ENCODE measurements at regions of chr12 and their contacts with region 1.

Region 1: GRCh38 chr12:1795785-1796514 is 24.4 kb upstream of the LRTM2 start:
- DNase-seq: peak; percentile 82 to 91 (median 88)
- ATAC-seq: peak; percentile 98
- H3K4me3 ChIP-seq: no peak overlapping the region
- H3K27ac ChIP-seq: 0 out of 3 replicates have a peak overlapping the region, but pooled peaks have one; percentile 19
- H3K4me1 ChIP-seq: peaks cover 0 to 45% of the 10 kb centered on the region in 2 experiments; a peak in 4 of 5 replicates
- H3K27me3 ChIP-seq: no peaks in the 10 kb centered on the region
- CTCF ChIP-seq: peak; percentile 73 to 91 (median 82)
- EP300 ChIP-seq: no peak
- POLR2A ChIP-seq: no peak
- RAD21 ChIP-seq: peak; percentile 98

Region 2: GRCh38 chr12:1583421-1584078 is 212.4 kb before region 1 on chr12:
- CTCF ChIA-PET with region 1: no interaction called
- POLR2A ChIA-PET with region 1: no interaction called
- in situ Hi-C with region 1: no loop called
- intact Hi-C with region 1: no loop called
- DNase-seq: peak; percentile 63 to 83 (median 70)
- ATAC-seq: peak; percentile 87
- H3K4me3 ChIP-seq: no peak overlapping the region
- H3K27ac ChIP-seq: no peak overlapping the region
- H3K4me1 ChIP-seq: no peaks in the 10 kb centered on the region; a peak in 2 of 5 replicates
- H3K27me3 ChIP-seq: no peaks in the 10 kb centered on the region
- CTCF ChIP-seq: peak; percentile 75 to 81 (median 79)
- EP300 ChIP-seq: no peak
- POLR2A ChIP-seq: no peak
- RAD21 ChIP-seq: peak; percentile 76 to 93

Region 3: GRCh38 chr12:1634590-1635191 is 161.3 kb before region 1 on chr12:
- CTCF ChIA-PET with region 1: interaction called, 22 read pairs
- POLR2A ChIA-PET with region 1: interaction called, 7 read pairs
- in situ Hi-C with region 1: no loop called
- intact Hi-C with region 1: loop called (anchors 1 kb)
- DNase-seq: peak; percentile 62 to 74 (median 66)
- ATAC-seq: peak; percentile 97
- H3K4me3 ChIP-seq: no peak overlapping the region
- H3K27ac ChIP-seq: no peak overlapping the region
- H3K4me1 ChIP-seq: peaks cover 2 to 15% of the 10 kb centered on the region in 2 experiments; a peak in 4 of 5 replicates
- H3K27me3 ChIP-seq: no peaks in the 10 kb centered on the region
- CTCF ChIP-seq: peak; percentile 78 to 86 (median 78)
- EP300 ChIP-seq: no peak
- POLR2A ChIP-seq: no peak
- RAD21 ChIP-seq: peak; percentile 79 to 81

Region 4: DNA sequence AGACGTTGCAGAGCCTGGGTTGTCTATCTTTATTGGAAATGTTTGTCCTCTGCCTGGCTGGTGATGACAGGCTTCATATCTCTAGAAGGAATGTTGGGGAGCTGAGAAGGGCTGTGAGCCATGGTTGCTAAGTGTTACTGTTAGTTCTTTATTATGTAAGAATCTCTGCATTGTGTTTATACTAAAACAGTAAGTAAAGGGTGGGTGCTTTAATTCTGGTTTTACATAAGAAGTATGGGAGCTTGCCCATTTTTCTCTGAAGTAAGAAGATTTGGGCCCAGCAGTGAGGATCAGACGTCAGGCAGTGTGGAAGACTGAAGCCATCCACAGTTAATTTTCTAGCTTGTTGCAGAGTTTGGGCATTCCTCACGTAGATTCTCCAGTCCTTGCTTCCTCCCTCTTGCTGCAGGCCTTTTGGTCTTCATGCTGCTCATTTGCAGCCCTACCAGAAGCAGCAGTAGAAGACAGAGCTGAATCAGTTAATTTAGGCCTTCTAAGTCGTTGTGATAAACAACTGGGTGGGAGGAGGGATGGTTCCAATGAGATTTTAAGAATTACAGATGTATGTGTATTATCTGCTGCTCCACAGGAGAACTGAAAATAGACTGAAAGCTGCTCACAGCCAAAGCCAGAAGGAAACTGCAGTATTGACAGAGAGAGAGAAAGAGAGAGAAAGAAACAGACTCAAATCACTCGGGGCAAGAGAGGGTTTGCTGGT is 145.5 kb before region 1 on chr12:
- CTCF ChIA-PET with region 1: interaction called, 44 read pairs
- POLR2A ChIA-PET with region 1: interaction called, 9 read pairs
- in situ Hi-C with region 1: no loop called
- intact Hi-C with region 1: loop called (anchors 1 kb)
- DNase-seq: no peak
- ATAC-seq: no peak; the same call in 2 of the 3 replicates
- H3K4me3 ChIP-seq: no peak overlapping the region
- H3K27ac ChIP-seq: no peak overlapping the region
- H3K4me1 ChIP-seq: peaks cover 21 to 39% of the 10 kb centered on the region in 2 experiments
- H3K27me3 ChIP-seq: no peaks in the 10 kb centered on the region
- CTCF ChIP-seq: no peak
- EP300 ChIP-seq: no peak
- POLR2A ChIP-seq: no peak
- RAD21 ChIP-seq: no peak

Region 5: DNA sequence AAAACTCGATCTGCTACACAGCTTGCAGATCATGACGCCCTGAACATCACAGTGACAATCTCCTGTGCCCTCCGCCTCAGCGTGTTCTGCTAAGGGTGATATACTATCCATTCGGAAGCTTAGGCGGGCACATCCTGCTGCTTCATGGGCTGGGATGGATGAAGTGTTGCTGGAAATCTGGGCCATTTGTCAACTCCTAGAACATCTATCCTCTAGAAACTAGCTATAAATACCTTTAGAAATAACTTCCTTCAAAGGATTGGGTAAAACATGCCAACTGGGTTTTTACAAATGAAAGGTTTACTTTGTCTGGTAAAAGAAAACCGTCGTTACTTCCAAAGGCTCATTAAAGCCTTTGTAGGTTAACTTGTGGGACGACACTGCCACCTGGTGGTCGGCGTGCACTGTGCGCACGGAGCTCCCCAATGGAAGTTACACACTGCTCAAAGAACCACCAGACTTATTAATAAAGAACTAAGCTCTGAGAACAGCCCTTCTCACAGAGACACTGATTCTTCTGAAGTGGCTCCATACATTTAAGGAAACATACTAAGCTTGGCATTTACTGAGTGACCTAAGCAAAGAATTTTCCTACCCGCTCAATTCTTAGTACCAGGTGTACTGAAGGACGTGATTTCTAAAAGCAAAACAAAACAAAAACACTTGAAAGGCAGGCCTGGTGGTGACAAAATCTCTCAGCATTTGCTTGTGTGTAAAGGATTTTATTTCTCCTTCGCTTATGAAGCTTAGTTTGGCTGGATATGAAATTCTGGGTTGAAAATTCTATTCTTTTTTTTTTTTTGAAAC is 144.1 kb after region 1 on chr12:
- CTCF ChIA-PET with region 1: interaction called, 44 read pairs
- POLR2A ChIA-PET with region 1: no interaction called
- in situ Hi-C with region 1: loop called (anchors 5 kb)
- intact Hi-C with region 1: loop called (anchors 1 kb)
- DNase-seq: peak; percentile 67 to 80 (median 72)
- ATAC-seq: peak; percentile 94
- H3K4me3 ChIP-seq: no peak overlapping the region
- H3K27ac ChIP-seq: no peak overlapping the region
- H3K4me1 ChIP-seq: no peaks in the 10 kb centered on the region
- H3K27me3 ChIP-seq: peaks cover 0 to 1% of the 10 kb centered on the region in 2 experiments; a peak in 1 of 5 replicates
- CTCF ChIP-seq: peak; percentile 76 to 88 (median 84)
- EP300 ChIP-seq: no peak
- POLR2A ChIP-seq: no peak
- RAD21 ChIP-seq: peak; percentile 90 to 93

Region 6: DNA sequence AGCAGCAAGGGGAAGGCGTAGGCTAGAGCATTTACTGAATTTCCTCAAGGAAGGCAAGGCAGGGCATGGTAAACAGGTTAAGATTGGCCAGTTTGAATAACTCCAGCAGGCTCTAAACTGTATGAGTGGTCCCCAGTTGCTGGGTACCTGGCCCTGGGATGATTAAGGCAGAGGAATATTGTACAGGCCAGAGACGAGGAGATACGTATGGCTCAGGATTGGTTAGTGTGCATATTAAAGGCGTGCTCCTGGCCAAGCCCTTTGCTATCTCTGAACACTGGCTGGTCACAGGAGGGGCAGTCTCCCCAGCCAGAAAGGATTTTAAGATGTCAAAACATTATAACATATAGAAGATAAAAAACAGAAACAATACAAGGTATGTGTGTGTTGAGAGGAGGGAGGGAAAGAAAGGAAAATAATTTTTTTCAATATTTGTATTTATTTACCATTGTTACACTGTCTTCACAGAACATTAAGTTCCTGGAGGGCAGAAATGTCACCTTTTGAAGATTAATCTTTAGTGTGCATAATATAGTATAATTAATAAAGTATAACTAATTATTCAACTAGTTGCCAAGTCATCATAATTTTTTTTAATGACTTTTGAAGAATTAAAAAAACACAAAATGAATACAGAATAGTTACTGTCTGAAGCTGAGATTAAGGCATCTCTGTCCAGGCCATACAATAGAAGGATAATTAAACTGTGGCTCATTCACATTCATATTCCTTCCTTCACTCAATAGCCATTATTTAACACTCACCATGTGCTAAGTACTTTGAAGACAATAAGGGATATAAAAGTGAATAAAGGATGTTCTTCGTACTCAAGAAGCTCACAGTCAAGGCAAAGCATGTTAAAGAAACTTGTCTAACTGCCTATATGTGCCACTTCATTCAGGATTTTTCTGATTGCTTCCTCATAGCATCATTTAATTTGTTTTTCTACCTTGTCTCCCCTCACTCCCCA is 166.4 kb after region 1 on chr12:
- CTCF ChIA-PET with region 1: no interaction called
- POLR2A ChIA-PET with region 1: no interaction called
- in situ Hi-C with region 1: no loop called
- intact Hi-C with region 1: no loop called
- DNase-seq: no peak
- ATAC-seq: no peak
- H3K4me3 ChIP-seq: no peak overlapping the region
- H3K27ac ChIP-seq: no peak overlapping the region
- H3K4me1 ChIP-seq: no peaks in the 10 kb centered on the region
- H3K27me3 ChIP-seq: no peaks in the 10 kb centered on the region
- CTCF ChIP-seq: no peak
- EP300 ChIP-seq: no peak
- POLR2A ChIP-seq: no peak
- RAD21 ChIP-seq: no peak

Region 7: DNA sequence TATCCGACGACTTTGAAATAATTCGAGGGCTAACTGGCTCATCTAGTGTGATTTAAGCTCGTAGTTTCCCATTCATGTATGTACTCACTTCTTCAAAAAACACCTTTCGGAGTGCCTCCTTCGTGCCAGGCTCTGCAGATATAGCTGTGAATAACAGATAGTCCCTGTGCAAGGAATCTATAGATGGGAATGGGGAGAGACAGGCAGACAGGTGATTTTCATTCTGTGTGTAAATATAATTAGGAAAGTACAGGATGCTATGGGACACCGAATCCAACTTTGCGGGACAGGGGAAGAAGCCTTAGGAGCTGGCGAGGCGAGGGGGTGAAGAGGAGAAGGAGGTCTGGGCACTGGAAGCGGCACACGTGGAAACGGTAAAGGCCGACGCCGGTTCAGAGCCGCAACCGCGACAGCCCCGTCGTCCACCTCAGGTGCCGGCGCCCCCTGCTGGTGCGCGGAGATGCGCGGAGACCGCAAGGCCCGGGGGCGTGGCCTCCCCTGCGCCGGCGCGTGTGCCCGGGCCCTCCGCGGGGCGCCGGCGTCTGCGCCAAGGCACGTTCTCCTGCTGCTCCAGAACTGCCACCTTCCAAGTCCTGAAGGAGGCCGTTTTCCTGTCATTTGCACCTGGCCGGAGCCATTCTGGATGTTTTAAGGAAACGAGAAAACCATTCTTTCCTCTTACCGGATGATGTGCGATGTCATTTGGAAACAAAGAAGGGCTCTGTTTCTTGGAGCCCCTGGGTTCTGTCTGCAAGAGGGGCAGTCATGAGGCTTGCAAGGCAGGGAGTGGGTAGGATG is 238.9 kb after region 1 on chr12:
- CTCF ChIA-PET with region 1: interaction called, 6 read pairs
- POLR2A ChIA-PET with region 1: no interaction called
- in situ Hi-C with region 1: no loop called
- intact Hi-C with region 1: loop called (anchors 10 kb)
- DNase-seq: peak; percentile 83 to 88 (median 86)
- ATAC-seq: peak; percentile 100
- H3K4me3 ChIP-seq: peak overlapping the region; percentile 26
- H3K27ac ChIP-seq: no peak overlapping the region
- H3K4me1 ChIP-seq: peaks cover 0 to 7% of the 10 kb centered on the region in 2 experiments; a peak in 3 of 5 replicates
- H3K27me3 ChIP-seq: peaks cover 14 to 45% of the 10 kb centered on the region in 2 experiments
- CTCF ChIP-seq: peak; percentile 68 to 78 (median 72)
- EP300 ChIP-seq: no peak
- POLR2A ChIP-seq: no peak
- RAD21 ChIP-seq: peak; percentile 35 to 69